Activated CD4-positive, alpha-beta T cell treated with anti-CD3 and anti-CD28 coated beads, Interleukin-2, amount 10 ng/mL, durations not matched to agents 24 days and 14 days (primary cell): ENCODE measurements at regions of chr12 and their contacts with region 1.

Region 1: DNA sequence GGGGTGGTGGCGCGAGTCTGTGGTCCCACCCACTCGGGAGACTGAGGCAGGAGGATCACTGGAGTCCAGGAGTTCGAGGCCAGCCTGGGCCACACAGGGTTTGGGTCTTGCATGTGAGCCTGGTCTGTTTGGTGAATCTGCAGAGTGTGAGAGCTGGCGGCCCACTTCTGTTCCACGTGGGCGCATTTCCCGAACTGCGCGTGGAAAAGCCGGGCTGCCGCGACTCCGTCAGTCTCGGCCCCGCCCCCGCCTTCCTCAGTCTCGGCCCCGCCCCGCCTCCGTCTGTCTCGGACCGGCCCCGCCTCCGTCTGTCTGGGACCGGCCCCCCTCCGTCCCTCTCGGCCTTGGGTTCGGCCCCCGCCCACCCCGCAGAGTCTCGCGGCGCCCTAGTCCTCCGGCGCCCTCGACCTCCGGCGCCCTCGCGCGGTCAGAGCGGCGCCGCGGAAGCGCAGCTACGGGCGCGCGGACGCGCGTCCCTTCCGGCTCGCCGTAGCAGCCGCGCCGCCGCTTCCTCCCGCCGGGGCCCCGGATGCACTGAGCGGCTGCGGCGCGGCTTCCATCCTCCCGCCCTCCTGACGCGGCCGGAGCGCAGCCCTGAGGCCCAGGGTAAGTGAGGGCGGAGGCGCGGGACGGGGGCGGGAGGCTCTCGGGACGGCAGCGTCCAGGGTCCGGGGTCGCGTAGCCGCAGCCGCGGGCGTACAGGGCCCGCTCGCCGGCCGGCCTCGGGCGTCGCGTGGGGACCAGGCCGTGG is at the start of gene EP400:
- DNase-seq: peak; percentile 98
- H3K4me3 Mint-ChIP-seq: peak within 1 kb of the TSS; percentile 87
- H3K27ac Mint-ChIP-seq: peak within 1 kb of the TSS; percentile 92
- H3K4me1 Mint-ChIP-seq: peaks cover 26% of the 10 kb centered on the region
- H3K27me3 Mint-ChIP-seq: no peaks in the 10 kb centered on the region
- total RNA-seq, gene EP400: 66.2 and 66.5 TPM in 2 replicates

Region 2: GRCh38 chr12:130871286-130872178 is 1078.1 kb before region 1 on chr12 and contains the start of gene RAN:
- intact Hi-C with region 1: loop called (anchors 10 kb)
- DNase-seq: peak; percentile 97
- H3K4me3 Mint-ChIP-seq: peak within 1 kb of the TSS; percentile 97
- H3K27ac Mint-ChIP-seq: peak within 1 kb of the TSS; percentile 98
- H3K4me1 Mint-ChIP-seq: peaks cover 35% of the 10 kb centered on the region
- H3K27me3 Mint-ChIP-seq: no peaks in the 10 kb centered on the region
- total RNA-seq, gene RAN: 2,022 and 2,040 TPM in 2 replicates

Region 3: GRCh38 chr12:131755305-131756113 is 194.1 kb before region 1 on chr12:
- intact Hi-C with region 1: loop called (anchors 5 kb)
- DNase-seq: peak; percentile 79
- H3K4me3 Mint-ChIP-seq: no peak overlapping the region
- H3K27ac Mint-ChIP-seq: no peak overlapping the region
- H3K4me1 Mint-ChIP-seq: peaks cover 3% of the 10 kb centered on the region
- H3K27me3 Mint-ChIP-seq: no peaks in the 10 kb centered on the region

Region 4: GRCh38 chr12:131830335-131830913 is 119.2 kb before region 1 on chr12:
- intact Hi-C with region 1: loop called (anchors 5 kb)
- DNase-seq: peak; percentile 81
- H3K4me3 Mint-ChIP-seq: peak overlapping the region; percentile 62
- H3K27ac Mint-ChIP-seq: no peak overlapping the region
- H3K4me1 Mint-ChIP-seq: peaks cover 5% of the 10 kb centered on the region
- H3K27me3 Mint-ChIP-seq: peaks cover 42% of the 10 kb centered on the region

Region 5: DNA sequence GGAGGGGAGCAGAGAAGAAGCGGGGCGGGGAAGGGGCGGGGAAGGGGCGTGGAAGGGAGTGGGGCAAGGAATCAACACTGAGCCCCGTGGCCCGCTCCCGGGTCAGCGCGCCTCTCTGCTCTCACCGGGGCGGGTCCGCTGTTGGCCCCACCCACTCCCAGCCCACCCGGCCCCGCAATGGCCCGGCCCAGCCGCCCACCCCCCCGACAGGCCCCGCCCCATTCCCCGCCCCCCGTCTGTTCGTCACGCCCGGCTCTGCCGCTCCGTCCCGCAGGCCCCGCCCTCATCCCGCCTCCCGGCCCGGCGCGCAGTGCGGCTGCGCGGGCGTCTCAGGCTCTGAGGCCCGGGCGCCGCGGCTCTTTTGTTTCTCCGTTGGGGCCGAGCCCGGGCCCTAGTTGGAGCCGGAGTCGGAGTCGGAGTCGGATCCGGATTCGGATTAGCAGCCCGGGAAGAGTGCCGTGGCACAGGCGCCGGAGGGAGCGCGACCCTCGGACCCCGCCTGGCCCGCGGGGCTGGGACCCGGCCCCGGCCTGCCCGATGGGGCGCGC is 55.2 kb before region 1 on chr12 and contains the start of gene ULK1:
- intact Hi-C with region 1: loop called (anchors 1 kb)
- DNase-seq: peak; percentile 99
- H3K4me3 Mint-ChIP-seq: peak within 1 kb of the TSS; percentile 87
- H3K27ac Mint-ChIP-seq: peak within 1 kb of the TSS; percentile 80
- H3K4me1 Mint-ChIP-seq: peaks cover 8% of the 10 kb centered on the region
- H3K27me3 Mint-ChIP-seq: no peaks in the 10 kb centered on the region
- total RNA-seq, gene ULK1: 25.3 and 25.7 TPM in 2 replicates

Region 6: GRCh38 chr12:131928711-131929580 is 20.7 kb before region 1 on chr12 and contains the start of gene PUS1:
- intact Hi-C with region 1: loop called (anchors 1 kb)
- DNase-seq: peak; percentile 98
- H3K4me3 Mint-ChIP-seq: peak within 1 kb of the TSS; percentile 94
- H3K27ac Mint-ChIP-seq: peak within 1 kb of the TSS; percentile 92
- H3K4me1 Mint-ChIP-seq: peaks cover 15% of the 10 kb centered on the region
- H3K27me3 Mint-ChIP-seq: no peaks in the 10 kb centered on the region
- total RNA-seq, gene PUS1: 91.6 and 97.0 TPM in 2 replicates

Region 7: DNA sequence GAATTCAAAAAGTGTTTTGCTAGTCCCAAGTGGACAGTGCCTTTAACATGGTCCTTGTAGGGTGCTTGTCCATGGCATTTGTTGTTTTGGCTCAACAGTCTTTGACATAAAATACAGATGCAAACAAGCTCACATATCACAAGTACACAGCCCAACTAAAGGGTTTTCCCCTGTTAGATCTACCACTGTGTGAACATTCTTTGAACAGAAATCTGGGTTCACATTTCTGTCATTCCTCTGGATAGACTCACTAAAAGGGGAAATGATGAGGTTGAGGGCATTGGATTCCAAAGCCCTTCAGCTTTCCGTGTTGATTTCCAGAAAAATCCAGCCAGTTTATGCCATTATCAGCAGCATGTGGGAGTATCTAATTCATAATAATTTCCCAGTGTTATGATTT is 54.2 kb after region 1 on chr12:
- intact Hi-C with region 1: no loop called
- DNase-seq: no peak
- H3K4me3 Mint-ChIP-seq: no peak overlapping the region
- H3K27ac Mint-ChIP-seq: no peak overlapping the region
- H3K4me1 Mint-ChIP-seq: peaks cover 1% of the 10 kb centered on the region
- H3K27me3 Mint-ChIP-seq: no peaks in the 10 kb centered on the region